Ovary (tissue), 10 donors: ENCODE measurements at regions of chr6 and their contacts with region 1.

Region 1: GRCh38 chr6:137530404-137530803 is 36.2 kb upstream of the OLIG3 start:
- DNase-seq: no peak
- H3K4me3 ChIP-seq: no peak overlapping the region
- H3K27ac ChIP-seq: no peak overlapping the region
- H3K4me1 ChIP-seq: no peaks in the 10 kb centered on the region
- H3K27me3 ChIP-seq: no peaks in the 10 kb centered on the region
- CTCF ChIP-seq: no peak
- EP300 ChIP-seq: no peak
- POLR2A ChIP-seq: no peak

Region 2: GRCh38 chr6:137571854-137572253 is 41.5 kb after region 1 on chr6:
- intact Hi-C with region 1: loop called in 1 of 4 experiments (anchors 2 kb)
- DNase-seq: no peak
- H3K4me3 ChIP-seq: no peak overlapping the region
- H3K27ac ChIP-seq: no peak overlapping the region
- H3K4me1 ChIP-seq: peaks cover 2% of the 10 kb centered on the region
- H3K27me3 ChIP-seq: no peaks in the 10 kb centered on the region
- CTCF ChIP-seq: no peak
- EP300 ChIP-seq: no peak
- POLR2A ChIP-seq: no peak